ENCODE measurements at regions of chr9 and their contacts with region 1.

Region 1: GRCh38 chr9:33264473-33265177 is at the starts of genes BAG1 and CHMP5:
- DNase-seq: peak; percentile 100
- H3K4me3 Mint-ChIP-seq: peak within 1 kb of the TSS; percentile 94
- H3K27ac Mint-ChIP-seq: peak within 1 kb of the TSS; percentile 98
- H3K4me1 Mint-ChIP-seq: peaks cover 47% of the 10 kb centered on the region
- H3K27me3 Mint-ChIP-seq: no peaks in the 10 kb centered on the region
- total RNA-seq, gene BAG1: 38.1 to 40.5 TPM
- total RNA-seq, gene CHMP5: 151 to 162 TPM

Region 2: DNA sequence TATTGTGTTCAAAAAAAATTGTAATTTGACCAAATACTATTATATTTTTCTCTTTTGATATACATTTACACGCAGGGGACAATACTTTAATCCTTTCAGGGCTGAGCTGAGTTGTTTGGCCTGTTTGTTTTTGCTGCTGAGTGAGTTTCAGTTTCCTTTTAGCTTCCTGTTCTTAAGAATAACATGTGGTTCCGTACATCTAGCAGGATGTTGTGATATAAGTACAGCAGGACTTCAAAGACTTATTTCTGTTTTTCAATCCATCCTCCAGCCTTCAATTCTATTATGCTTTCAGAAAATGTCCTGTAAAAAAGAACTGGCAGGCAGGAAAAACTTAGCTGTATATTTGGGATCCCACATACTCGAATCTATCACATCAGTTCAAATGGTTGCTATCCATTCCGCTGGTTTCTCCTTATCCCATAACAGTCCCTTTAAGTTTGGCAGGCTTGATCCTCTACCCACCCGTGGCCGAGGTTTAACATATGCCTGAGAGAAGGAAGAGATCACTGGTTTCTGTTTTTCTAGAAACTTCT is 1917.5 kb before region 1 on chr9:
- CTCF ChIA-PET with region 1: no interaction called
- intact Hi-C with region 1: loop called (anchors 5 kb)
- DNase-seq: peak; percentile 10
- H3K4me3 Mint-ChIP-seq: peak overlapping the region; percentile 66
- H3K27ac Mint-ChIP-seq: peak overlapping the region; percentile 93
- H3K4me1 Mint-ChIP-seq: peaks cover 27% of the 10 kb centered on the region
- H3K27me3 Mint-ChIP-seq: no peaks in the 10 kb centered on the region

Region 3: GRCh38 chr9:31700252-31701045 is 1564.2 kb before region 1 on chr9:
- CTCF ChIA-PET with region 1: no interaction called
- intact Hi-C with region 1: no loop called
- DNase-seq: no peak
- H3K4me3 Mint-ChIP-seq: no peak overlapping the region
- H3K27ac Mint-ChIP-seq: no peak overlapping the region
- H3K4me1 Mint-ChIP-seq: peaks cover 12% of the 10 kb centered on the region
- H3K27me3 Mint-ChIP-seq: no peaks in the 10 kb centered on the region

Region 4: DNA sequence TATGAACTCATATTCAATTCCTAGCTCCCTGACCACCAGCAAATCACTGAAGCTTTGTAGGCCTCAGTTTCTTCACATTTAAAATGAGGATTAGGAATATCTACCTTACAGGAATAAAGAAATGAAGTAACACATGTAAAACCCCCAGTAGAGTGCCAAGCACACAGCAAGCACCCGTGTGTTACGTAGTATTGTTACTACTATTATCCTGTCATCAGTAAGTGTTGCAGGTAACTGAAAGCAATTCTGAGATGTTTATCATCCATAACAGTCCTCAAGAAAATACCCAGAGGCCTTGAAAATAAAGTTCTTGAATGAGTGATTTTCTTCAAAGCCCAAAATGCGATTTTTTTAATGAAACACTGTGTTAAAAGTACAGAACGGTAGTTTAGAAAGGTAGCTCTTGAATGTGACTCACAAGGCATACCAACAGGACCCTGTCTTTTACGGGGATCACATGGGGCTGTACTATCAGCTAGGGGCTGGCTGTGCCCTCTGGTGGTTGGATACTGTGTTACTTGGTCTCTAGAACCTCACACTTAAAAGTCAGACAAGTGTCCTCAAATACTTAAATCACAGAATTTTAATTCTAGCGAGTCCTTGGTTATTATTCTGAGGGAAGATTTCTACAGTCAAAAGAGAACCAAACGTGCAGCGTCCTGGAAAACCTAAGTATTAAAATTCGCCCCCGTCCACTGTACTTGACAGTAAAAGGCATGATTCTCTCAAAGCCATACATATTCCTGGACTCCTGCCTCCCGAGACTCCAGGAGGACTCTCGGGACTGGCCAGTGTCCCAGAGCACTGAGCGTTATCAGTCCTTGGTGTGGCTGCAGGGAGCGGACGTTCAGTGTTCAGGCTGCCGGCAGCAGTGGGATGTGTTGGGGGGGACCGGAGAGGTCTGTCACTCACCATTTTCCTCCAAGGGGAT is 692.4 kb before region 1 on chr9:
- CTCF ChIA-PET with region 1: no interaction called
- intact Hi-C with region 1: loop called (anchors 1 kb)
- DNase-seq: peak; percentile 88
- H3K4me3 Mint-ChIP-seq: peak overlapping the region; percentile 88
- H3K27ac Mint-ChIP-seq: peak overlapping the region; percentile 92
- H3K4me1 Mint-ChIP-seq: peaks cover 16% of the 10 kb centered on the region
- H3K27me3 Mint-ChIP-seq: no peaks in the 10 kb centered on the region

Region 5: GRCh38 chr9:33159760-33160127 is 104.9 kb before region 1 on chr9:
- CTCF ChIA-PET with region 1: no interaction called
- intact Hi-C with region 1: no loop called
- DNase-seq: peak; percentile 87
- H3K4me3 Mint-ChIP-seq: peak overlapping the region; percentile 64
- H3K27ac Mint-ChIP-seq: peak overlapping the region; percentile 97
- H3K4me1 Mint-ChIP-seq: peaks cover 92% of the 10 kb centered on the region
- H3K27me3 Mint-ChIP-seq: no peaks in the 10 kb centered on the region

Region 6: DNA sequence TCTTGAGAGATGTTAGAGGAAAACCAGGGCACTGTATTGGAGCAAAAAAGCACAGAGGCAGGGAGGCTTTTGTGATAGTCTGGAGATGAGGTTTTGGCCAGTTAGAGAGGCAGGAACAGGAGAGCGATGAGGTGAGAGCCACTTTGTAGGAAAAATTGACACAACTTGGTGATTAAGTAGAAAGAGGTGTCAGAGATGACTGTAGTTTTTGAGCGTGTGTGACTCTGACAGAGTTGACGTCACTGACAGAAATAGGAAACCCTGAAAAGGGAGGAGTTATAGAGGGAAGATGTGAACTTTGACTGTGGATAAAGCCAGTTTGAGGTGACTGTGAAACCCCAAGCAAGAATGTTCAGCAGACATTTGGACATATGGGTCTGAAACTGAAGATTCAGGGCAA is 41.4 kb after region 1 on chr9:
- CTCF ChIA-PET with region 1: no interaction called
- intact Hi-C with region 1: loop called (anchors 1 kb)
- DNase-seq: peak; percentile 69
- H3K4me3 Mint-ChIP-seq: no peak overlapping the region
- H3K27ac Mint-ChIP-seq: no peak overlapping the region
- H3K4me1 Mint-ChIP-seq: peaks cover 10% of the 10 kb centered on the region
- H3K27me3 Mint-ChIP-seq: no peaks in the 10 kb centered on the region

Region 7: GRCh38 chr9:33320568-33321261 is 56.1 kb after region 1 on chr9:
- CTCF ChIA-PET with region 1: no interaction called
- intact Hi-C with region 1: loop called (anchors 1 kb)
- DNase-seq: peak; percentile 57
- H3K4me3 Mint-ChIP-seq: no peak overlapping the region
- H3K27ac Mint-ChIP-seq: peak overlapping the region; percentile 85
- H3K4me1 Mint-ChIP-seq: peaks cover 21% of the 10 kb centered on the region
- H3K27me3 Mint-ChIP-seq: no peaks in the 10 kb centered on the region

Region 8: DNA sequence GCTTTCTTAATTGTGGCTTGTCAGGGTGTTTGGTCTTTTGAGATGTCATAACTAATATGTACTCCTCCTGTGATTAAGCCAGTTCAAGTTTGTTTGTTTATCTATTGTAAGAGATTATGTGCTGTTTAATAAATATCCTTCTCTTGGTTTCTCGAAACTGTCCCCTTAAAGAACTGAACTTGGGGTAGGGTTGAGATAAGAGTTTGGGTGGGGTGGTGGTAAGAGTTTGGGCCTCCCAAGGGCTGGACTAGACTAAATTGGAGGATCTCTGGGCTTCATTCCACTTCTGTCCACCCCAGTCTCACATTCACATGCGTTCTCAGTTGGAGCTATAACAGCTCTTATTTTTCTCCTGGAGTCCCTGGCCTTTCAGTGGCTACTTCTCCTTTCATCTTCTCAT is 99.5 kb after region 1 on chr9:
- CTCF ChIA-PET with region 1: no interaction called
- intact Hi-C with region 1: no loop called
- DNase-seq: no peak
- H3K4me3 Mint-ChIP-seq: no peak overlapping the region
- H3K27ac Mint-ChIP-seq: peak overlapping the region; percentile 14
- H3K4me1 Mint-ChIP-seq: no peaks in the 10 kb centered on the region
- H3K27me3 Mint-ChIP-seq: no peaks in the 10 kb centered on the region

Region 9: DNA sequence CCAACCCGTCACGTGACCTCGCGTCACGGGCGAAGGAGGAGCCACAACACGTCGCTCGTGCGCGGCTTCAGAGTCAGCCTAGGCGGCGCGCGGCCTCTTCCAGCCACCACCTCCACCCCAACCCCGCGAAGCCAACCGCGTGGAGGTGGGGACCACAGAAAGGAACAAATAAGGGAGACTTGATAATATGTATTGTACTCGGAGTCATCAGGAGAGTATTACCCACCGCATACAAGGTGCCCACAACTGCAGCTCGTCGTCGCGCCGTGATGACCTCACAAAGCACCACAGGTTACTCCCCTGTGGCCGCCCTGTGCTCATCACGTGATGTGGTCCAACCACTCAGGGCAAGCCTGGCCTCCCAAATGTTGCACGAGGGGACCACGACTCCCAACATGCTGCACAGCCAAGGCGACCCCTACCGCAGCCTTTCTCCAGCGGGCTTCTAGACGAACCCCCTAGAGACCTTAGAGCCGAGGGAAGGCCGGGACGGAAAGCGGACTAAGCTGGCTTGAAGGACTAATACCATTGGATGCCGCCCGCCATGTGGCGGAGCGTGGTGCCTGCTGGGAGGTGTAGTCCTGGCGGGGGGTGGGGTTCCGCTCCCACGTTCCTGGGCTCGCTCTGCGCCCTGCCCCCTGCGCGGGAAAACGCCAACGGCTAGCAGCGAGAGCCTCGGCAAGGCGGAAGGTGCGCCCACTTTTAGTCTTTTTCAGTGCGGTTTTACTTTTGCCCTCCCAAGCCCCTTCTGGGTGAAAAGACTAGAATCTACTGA is 784.5 kb after region 1 on chr9:
- CTCF ChIA-PET with region 1: no interaction called
- intact Hi-C with region 1: loop called (anchors 1 kb)
- DNase-seq: peak; percentile 98
- H3K4me3 Mint-ChIP-seq: peak overlapping the region; percentile 91
- H3K27ac Mint-ChIP-seq: peak overlapping the region; percentile 98
- H3K4me1 Mint-ChIP-seq: peaks cover 33% of the 10 kb centered on the region
- H3K27me3 Mint-ChIP-seq: no peaks in the 10 kb centered on the region

Measured in activated naive CD4-positive, alpha-beta T cell treated with anti-CD3 and anti-CD28 coated beads for 36 hours (primary cell).